Lower lobe of right lung (tissue), 2 donors: ENCODE measurements at regions of chr6 and their contacts with region 1.

Region 1: DNA sequence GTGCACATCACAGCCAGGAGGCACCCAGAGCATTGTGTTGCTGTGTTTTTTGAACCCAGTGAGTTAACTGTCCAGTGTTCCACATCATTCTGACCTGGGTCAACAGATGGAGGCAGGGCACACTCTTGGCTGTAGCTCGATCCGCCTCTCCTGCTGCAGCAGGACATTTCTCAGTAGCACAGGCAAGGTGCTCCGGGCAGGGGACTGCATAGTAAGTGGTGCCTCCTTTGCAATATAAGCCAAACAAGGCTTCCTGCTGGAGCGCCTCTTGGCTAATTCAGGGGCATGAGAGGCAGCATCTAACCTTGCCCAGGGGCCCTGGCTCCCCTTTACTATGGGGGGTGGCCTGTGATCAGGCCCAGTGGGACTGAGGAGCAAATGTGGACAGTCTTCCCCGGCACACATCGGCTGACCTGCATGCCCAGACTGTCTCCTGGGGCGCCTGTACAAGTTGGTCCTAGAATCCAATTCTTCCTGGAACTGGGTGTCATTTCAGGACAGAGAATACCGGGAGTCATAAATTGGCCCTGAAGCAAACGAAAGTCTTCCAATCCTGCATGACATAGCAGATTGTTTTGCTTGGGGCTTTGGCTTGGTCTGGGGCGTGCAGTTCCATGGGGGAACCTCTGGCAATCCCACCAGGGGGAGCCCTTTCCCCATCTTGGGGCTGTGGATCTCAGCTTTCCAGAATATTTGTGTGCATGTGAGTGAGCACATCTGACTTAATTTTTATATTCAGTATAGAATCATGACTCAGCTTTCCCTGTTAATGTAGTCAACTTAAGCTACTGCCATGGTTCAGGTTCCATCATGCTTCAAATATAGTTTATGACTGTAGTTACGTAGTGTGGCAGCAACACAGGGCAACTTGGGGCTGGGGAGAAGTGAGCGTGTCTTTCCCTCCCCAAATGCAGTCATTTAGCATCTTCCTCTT is 56.0 kb upstream of the DDR1 start:
- DNase-seq: peak; percentile 84
- ATAC-seq: peak; percentile 94
- H3K4me3 ChIP-seq: no peak overlapping the region
- H3K27ac ChIP-seq: peak overlapping the region; percentile 58
- H3K4me1 ChIP-seq: peaks cover 40% of the 10 kb centered on the region
- H3K27me3 ChIP-seq: no peaks in the 10 kb centered on the region
- CTCF ChIP-seq: peak; percentile 95

Region 2: GRCh38 chr6:30571075-30571768 is 257.1 kb before region 1 on chr6 and contains the start of gene ABCF1:
- intact Hi-C with region 1: no loop called
- DNase-seq: peak; percentile 99
- ATAC-seq: peak; percentile 99 to 100
- H3K4me3 ChIP-seq: peak within 1 kb of the TSS; percentile 95
- H3K27ac ChIP-seq: peak within 1 kb of the TSS; percentile 90
- H3K4me1 ChIP-seq: peaks cover 41% of the 10 kb centered on the region
- H3K27me3 ChIP-seq: no peaks in the 10 kb centered on the region
- CTCF ChIP-seq: no peak
- total RNA-seq, gene ABCF1: 40.0 TPM

Region 3: DNA sequence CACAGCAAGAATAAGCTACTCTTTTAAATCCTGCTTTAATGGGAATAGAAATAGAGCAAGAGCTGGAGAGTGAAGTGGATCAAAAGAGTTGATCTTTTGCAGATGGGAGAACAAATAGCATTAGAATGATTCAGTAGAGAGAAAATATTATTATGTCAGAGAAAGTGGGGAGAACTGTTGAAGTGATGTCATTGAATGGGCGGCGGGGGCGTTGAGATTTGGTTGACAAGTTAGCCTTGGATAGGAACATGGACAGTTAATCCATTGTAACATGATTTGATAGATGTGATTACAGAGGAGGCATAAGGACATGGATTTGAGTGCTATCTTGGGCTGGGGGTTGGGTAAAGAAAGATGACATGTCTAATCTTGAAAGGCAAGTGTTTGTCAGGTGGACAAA is 192.5 kb before region 1 on chr6:
- intact Hi-C with region 1: no loop called
- DNase-seq: no peak
- ATAC-seq: no peak
- H3K4me3 ChIP-seq: no peak overlapping the region
- H3K27ac ChIP-seq: no peak overlapping the region
- H3K4me1 ChIP-seq: no peaks in the 10 kb centered on the region
- H3K27me3 ChIP-seq: no peaks in the 10 kb centered on the region
- CTCF ChIP-seq: no peak

Region 4: DNA sequence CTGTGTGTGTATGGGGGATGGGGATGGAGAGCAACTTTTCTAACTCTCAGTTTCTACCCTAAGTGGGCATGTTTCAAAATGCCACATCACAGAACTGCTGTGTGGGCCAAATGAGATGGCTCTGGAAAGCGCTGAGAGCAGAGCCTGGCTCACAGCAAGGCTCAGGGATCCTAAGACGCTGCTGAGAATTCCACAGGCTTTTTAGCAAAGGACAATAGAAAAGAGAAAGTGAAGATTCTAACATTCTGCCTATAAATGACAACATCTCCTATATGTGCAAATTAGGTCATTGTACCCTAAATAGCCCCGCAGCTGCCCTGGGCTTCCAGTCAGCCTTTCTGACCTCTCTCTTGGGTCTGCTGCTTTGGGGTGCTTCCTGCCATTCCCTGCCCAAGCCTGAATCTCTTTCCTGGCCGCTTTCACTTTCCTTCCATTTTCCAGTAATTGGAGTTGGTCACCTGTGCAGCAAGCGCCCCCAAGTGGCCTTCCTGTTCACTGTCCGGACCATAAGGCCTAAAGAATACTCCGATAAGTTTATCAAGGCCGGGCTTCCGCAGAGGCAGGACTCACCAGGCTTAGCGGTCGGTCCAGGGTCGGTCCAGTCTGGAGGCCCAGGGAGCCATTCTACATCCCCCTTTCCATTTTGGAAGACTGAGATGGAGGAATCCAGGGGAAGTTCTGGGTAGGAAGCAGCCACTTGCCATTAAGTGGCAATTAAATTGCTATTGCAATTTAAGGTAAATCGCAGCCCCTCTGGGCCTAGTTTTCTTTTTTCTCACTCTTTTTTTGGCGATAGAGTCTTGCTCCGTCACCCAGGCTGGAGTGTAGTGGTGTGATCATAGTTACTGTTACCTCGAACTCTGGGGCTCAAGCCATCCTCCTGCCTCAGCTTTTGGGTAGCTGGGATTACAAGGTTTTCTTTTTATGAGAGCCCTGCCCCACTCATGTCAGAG is 49.4 kb after region 1 on chr6:
- intact Hi-C with region 1: loop called (anchors 10 kb)
- DNase-seq: peak; percentile 93
- ATAC-seq: peak; percentile 90
- H3K4me3 ChIP-seq: peak overlapping the region; percentile 44
- H3K27ac ChIP-seq: peak overlapping the region; percentile 72
- H3K4me1 ChIP-seq: peaks cover 20% of the 10 kb centered on the region
- H3K27me3 ChIP-seq: no peaks in the 10 kb centered on the region
- CTCF ChIP-seq: peak; percentile 86

Region 5: DNA sequence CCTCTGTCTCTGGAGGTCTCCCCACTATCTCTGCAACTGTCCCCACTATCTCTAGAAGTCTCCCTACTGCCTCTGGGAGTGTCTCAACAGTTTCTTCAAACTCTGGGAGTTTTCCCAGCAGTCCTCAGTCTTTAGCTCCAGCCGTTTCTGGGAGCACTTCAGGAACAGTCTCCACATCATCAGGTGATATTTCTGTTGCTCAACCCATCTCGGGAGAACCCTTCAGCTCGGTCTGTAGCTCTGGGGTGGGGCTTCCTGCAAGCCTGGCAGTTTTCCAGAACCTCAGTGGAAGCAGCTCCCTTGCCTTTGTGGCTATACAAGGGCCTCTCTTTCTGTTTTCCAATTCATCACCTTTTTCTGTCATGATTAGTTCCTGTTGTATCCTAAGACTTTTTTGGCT is 106.7 kb after region 1 on chr6:
- intact Hi-C with region 1: no loop called
- DNase-seq: peak; percentile 72
- ATAC-seq: peak; percentile 49 to 55
- H3K4me3 ChIP-seq: peak overlapping the region; percentile 39
- H3K27ac ChIP-seq: peak overlapping the region; percentile 70
- H3K4me1 ChIP-seq: peaks cover 27% of the 10 kb centered on the region
- H3K27me3 ChIP-seq: no peaks in the 10 kb centered on the region
- CTCF ChIP-seq: no peak